Activated T-helper 1 cell treated with anti-CD3 and anti-CD28 coated beads, Interleukin-12 subunit alpha, Interleukin-12 subunit beta, Interleukin-2, Interleukin-4 antibody, amounts not matched to agents 30 ng/mL and 10 ng/mL and 1 ng/mL, durations not matched to agents 14 hours and 24 hours and 36 hours (primary cell): ENCODE measurements at regions of chr5 and their contacts with region 1.

Region 1: DNA sequence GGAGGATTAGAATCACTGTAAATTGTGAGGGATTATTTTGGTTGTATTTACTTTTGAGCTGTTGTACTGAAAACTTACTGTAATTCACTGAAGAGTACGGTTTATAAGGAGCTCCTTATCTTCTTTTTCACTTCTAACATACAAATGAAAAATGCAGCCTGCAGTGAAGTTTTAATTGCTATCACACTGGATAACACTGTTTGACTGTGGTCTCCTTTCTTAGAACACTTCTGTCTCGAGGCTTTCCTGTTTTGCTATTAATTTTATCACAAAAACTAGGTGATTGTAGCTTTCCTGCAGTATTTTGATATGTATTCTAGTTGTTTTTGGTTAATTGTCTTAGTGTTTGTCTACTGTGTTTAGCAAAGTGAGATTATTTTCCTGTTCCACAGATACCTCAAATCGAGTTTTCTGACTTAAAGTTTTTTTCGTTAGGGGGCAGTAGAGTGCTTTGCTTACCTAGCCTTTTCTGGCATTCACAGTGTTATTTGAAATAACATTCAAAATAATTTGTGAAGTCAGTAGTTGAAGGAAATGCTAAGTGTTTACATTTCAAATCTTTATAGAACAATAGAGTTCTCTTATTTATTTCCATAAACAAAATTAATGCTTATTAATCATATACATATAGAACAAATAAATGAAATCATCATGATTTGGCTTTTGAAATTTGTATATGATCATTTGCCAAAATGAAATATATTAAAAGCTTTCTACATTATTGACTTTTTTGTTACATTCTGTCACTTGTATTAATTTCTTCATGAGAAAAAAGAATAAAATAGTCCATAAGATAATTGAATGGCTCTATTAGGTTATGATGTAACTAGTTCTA is 52.9 kb downstream of the COMMD10 start:
- DNase-seq: no peak
- H3K4me3 Mint-ChIP-seq: no peak overlapping the region
- H3K27ac Mint-ChIP-seq: no peak overlapping the region
- H3K4me1 Mint-ChIP-seq: peaks cover 15% of the 10 kb centered on the region
- H3K27me3 Mint-ChIP-seq: no peaks in the 10 kb centered on the region

Region 2: DNA sequence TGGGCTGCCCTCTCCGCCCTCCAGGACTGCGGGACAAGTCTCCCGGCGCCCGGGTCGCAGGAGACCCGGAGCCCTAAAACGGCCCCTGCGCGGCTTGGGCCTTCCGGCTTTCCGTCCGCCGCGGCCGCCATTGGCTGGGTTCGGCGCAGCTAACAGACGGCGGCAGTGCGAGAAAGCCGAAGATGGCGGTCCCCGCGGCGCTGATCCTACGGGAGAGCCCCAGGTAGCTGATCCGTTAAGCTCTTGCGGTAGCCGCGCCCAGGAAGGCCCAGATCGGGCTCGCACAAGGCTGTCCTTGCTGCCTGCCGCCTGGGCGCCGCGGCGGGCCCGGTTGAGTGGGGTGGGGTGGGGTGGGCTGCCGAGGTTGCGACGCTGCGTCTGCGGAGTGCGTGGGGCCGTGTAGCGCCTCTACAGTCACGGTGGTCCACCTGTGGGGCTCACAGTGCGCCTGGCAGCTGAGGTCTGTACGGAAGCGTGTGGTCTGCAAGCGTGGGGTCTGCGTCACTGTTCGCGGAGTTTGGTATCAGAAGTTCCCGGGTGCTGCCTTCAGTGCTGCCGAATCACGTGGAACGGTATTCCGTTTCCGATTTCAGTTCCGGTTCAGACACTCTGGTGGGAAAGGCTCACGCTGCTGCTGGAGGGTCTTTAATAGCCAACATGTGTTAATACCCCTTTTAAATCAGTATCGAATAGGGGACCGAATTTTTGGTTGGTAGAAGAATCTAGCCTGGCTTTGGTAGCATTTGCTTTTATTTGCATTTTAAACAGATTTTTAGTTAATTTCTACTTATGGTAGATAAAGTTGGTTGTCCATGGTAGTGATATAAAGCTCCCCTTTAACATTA is 52.7 kb before region 1 on chr5 and contains the start of gene COMMD10:
- intact Hi-C with region 1: no loop called
- DNase-seq: peak; percentile 72
- H3K4me3 Mint-ChIP-seq: peak within 1 kb of the TSS; percentile 89
- H3K27ac Mint-ChIP-seq: peak within 1 kb of the TSS; percentile 86
- H3K4me1 Mint-ChIP-seq: peaks cover 30% of the 10 kb centered on the region
- H3K27me3 Mint-ChIP-seq: peaks cover 4% of the 10 kb centered on the region
- total RNA-seq, gene COMMD10: 21.8 and 23.6 TPM in 2 replicates

Region 3: DNA sequence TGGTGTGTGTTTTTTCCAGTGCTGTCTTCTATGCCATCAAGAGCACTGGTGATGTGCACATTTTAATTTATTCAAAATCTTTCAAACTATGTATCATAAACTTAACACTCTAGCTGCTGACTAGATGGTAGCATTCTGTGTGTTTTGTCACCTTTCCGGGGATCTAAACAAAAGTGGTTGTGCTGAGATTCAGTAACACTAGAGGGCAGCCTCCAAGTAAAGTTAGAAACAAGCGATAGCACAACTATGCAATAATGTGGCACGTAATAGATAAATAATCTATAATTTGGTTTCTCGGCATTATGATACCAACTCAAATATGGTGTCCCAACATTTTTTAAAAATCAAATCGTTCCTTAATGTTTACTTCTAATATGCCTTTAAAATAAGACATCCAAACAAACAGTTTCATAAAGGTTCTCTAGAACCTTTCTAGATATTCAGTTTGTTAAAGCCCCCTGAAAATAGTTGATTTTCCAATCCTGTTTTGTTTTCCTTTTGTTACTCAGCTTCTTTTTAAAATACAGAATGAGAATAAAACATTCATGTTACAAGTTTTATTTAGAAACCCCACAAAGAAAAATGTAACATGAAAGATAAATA is 420.0 kb after region 1 on chr5:
- intact Hi-C with region 1: loop called (anchors 5 kb)
- DNase-seq: no peak
- H3K4me3 Mint-ChIP-seq: no peak overlapping the region
- H3K27ac Mint-ChIP-seq: no peak overlapping the region
- H3K4me1 Mint-ChIP-seq: no peaks in the 10 kb centered on the region
- H3K27me3 Mint-ChIP-seq: peaks cover 6% of the 10 kb centered on the region

Region 4: GRCh38 chr5:116574367-116575325 is 436.9 kb after region 1 on chr5 and contains the start of gene SEMA6A:
- intact Hi-C with region 1: loop called (anchors 5 kb)
- DNase-seq: peak; percentile 59
- H3K4me3 Mint-ChIP-seq: peak within 1 kb of the TSS; percentile 81
- H3K27ac Mint-ChIP-seq: peak within 1 kb of the TSS; percentile 76
- H3K4me1 Mint-ChIP-seq: peaks cover 26% of the 10 kb centered on the region
- H3K27me3 Mint-ChIP-seq: peaks cover 78% of the 10 kb centered on the region
- total RNA-seq, gene SEMA6A: 0.23 and 0.39 TPM in 2 replicates

Region 5: DNA sequence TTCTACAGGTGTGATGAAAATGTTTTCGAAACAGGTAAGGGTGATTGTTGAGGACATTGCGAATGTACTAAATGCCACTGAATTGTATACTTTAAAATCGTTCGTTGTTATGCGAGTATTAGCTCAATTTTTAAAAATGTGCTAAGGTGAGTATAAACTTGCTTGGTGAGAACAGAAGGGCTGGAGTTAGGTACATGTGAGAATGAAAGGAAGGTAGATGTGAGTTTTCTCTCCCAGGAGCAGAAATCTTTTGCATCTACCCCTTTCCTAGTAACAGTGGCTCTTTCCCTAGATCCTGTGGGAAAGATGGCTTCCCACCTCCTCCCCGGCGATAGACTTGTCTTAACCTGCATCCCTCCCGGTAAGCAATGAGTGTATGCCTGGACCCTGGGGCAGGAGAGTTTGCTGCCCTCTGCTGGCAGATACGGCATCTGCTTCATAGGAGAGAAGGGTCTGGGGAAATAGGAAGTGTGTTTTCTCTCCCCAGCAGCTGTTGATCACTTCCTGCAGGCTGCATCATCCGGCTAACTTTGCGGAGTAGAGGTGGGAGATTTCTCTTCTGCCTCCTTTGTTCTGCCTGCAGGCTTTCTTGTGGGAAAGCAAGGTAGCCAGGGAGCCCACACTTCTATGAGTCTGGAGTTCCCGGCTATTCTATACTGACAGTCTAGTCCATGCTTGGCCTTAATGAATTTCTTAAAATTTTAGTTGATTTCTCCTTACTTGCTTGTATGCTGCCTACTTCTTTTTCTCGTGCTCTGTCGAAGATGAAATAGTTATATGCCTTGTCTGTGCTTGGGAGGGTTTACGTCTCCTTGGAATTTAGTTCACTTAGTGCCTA is 810.1 kb after region 1 on chr5:
- intact Hi-C with region 1: loop called (anchors 1 kb)
- DNase-seq: peak; percentile 38
- H3K4me3 Mint-ChIP-seq: no peak overlapping the region
- H3K27ac Mint-ChIP-seq: no peak overlapping the region
- H3K4me1 Mint-ChIP-seq: no peaks in the 10 kb centered on the region
- H3K27me3 Mint-ChIP-seq: no peaks in the 10 kb centered on the region